ENCODE measurements at regions of chr1 and their contacts with region 1.

Region 1: GRCh38 chr1:180617774-180618395 is 13.9 kb upstream of the XPR1 start:
- DNase-seq: no peak
- H3K4me3 Mint-ChIP-seq: no peak overlapping the region
- H3K27ac Mint-ChIP-seq: no peak overlapping the region
- H3K4me1 Mint-ChIP-seq: no peaks in the 10 kb centered on the region
- H3K27me3 Mint-ChIP-seq: no peaks in the 10 kb centered on the region

Region 2: DNA sequence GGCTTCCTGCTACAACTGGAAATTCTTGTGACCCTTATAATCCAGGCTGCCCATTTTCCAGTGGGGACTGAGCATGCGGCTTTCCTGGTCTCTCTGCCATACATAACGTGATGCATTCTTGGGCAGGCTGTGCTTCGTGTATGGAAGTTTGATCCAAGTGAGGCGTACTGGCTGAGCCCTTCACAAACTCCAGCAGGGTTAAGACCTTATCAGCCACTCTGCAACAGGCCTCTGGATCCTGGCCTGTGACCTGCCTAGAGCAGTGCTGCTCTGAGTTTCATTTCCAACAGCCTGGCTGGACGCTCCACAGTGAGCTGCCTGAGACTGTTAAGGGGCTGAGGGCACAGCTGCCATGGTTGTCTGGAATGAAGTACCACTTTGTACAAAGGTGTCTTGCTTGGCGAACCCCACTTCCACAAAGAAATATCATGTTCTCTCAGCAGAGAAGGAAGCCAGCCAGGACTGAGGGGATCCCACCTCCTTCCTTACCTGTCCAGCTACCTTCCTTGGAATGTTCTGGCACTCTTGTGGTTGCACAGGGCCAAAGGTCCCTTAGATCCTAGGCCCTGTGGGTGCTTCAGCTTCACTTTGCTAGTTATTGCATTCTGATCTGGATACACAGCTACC is 14.5 kb before region 1 on chr1:
- CTCF ChIA-PET with region 1: no interaction called
- POLR2A ChIA-PET with region 1: no interaction called
- DNase-seq: no peak
- H3K4me3 Mint-ChIP-seq: no peak overlapping the region
- H3K27ac Mint-ChIP-seq: no peak overlapping the region
- H3K4me1 Mint-ChIP-seq: no peaks in the 10 kb centered on the region
- H3K27me3 Mint-ChIP-seq: peaks cover 2% of the 10 kb centered on the region

Region 3: DNA sequence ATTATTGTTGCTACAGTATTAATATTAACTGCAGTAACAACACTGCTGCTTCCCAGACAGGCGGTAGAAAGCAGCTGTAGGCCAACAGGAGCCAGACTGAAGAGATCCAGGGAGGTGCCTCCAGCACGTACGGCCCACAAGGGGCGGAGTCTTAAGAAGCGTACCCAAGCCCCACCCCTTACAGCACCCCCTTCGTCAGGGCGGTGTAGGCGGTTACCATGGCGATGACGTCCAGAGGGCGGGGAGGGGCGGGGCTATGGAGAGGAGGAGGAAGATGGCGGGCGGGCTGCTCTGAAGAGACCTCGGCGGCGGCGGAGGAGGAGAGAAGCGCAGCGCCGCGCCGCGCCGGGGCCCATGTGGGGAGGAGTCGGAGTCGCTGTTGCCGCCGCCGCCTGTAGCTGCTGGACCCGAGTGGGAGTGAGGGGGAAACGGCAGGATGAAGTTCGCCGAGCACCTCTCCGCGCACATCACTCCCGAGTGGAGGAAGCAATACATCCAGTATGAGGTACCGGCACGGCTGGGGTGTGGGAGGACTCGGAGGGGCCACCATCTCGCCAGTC is 14.0 kb after region 1 on chr1 and contains the start of gene XPR1:
- CTCF ChIA-PET with region 1: interaction called, 10 read pairs
- POLR2A ChIA-PET with region 1: no interaction called
- DNase-seq: peak; percentile 98
- H3K4me3 Mint-ChIP-seq: peak within 1 kb of the TSS; percentile 16
- H3K27ac Mint-ChIP-seq: peak within 1 kb of the TSS; percentile 81
- H3K4me1 Mint-ChIP-seq: peaks cover 6% of the 10 kb centered on the region
- H3K27me3 Mint-ChIP-seq: peaks cover 6% of the 10 kb centered on the region
- total RNA-seq, gene XPR1: 19.9 to 20.5 TPM